Calu3 (cell line): ENCODE measurements at regions of chr3 and their contacts with region 1.

Region 1: GRCh38 chr3:184135149-184135910 is at the start of gene EIF2B5:
- DNase-seq: peak; percentile 95
- H3K4me3 Mint-ChIP-seq: peak within 1 kb of the TSS; percentile 99
- H3K27ac Mint-ChIP-seq: peak within 1 kb of the TSS; percentile 94
- H3K4me1 Mint-ChIP-seq: peaks cover 36% of the 10 kb centered on the region
- H3K27me3 Mint-ChIP-seq: no peaks in the 10 kb centered on the region
- CTCF ChIP-seq: peak; percentile 11
- total RNA-seq, gene EIF2B5: 79.6 and 87.9 TPM in 2 replicates

Region 2: DNA sequence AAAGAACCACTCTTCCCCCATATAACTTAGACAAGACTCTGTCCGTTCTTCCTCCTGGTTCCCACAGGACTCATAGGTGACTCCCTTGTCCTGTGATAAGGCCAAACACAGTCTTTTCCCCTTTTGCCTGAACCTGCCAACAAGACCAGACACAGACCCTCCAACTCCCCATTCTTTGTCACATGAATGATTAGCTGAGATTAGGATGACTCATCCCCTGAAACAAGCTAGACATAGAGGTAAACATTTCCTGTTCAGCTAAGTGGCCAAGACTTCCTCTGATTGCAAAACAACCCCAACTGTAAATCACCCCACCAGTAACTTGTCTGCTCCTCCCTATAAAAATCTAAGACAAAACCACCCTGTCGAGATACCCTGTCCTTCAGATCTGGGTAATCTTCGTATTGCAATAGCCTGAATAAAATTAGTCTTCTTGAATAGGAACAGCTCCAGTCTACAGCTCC is 49.9 kb before region 1 on chr3:
- CTCF ChIA-PET with region 1: no interaction called
- intact Hi-C with region 1: no loop called
- DNase-seq: no peak
- H3K4me3 Mint-ChIP-seq: no peak overlapping the region
- H3K27ac Mint-ChIP-seq: no peak overlapping the region
- H3K4me1 Mint-ChIP-seq: no peaks in the 10 kb centered on the region
- H3K27me3 Mint-ChIP-seq: no peaks in the 10 kb centered on the region
- CTCF ChIP-seq: no peak

Region 3: GRCh38 chr3:184168363-184169120 is 33.2 kb after region 1 on chr3:
- CTCF ChIA-PET with region 1: no interaction called
- intact Hi-C with region 1: no loop called
- DNase-seq: no peak
- H3K4me3 Mint-ChIP-seq: no peak overlapping the region
- H3K27ac Mint-ChIP-seq: no peak overlapping the region
- H3K4me1 Mint-ChIP-seq: no peaks in the 10 kb centered on the region
- H3K27me3 Mint-ChIP-seq: no peaks in the 10 kb centered on the region
- CTCF ChIP-seq: no peak

Region 4: GRCh38 chr3:184185461-184186308 is 50.4 kb after region 1 on chr3 and contains the start of gene ABCF3:
- CTCF ChIA-PET with region 1: interaction called, 5 read pairs
- intact Hi-C with region 1: loop called (anchors 2 kb)
- DNase-seq: peak; percentile 100
- H3K4me3 Mint-ChIP-seq: peak within 1 kb of the TSS; percentile 100
- H3K27ac Mint-ChIP-seq: peak within 1 kb of the TSS; percentile 96
- H3K4me1 Mint-ChIP-seq: peaks cover 27% of the 10 kb centered on the region
- H3K27me3 Mint-ChIP-seq: no peaks in the 10 kb centered on the region
- CTCF ChIP-seq: no peak
- total RNA-seq, gene ABCF3: 114 and 116 TPM in 2 replicates

Region 5: DNA sequence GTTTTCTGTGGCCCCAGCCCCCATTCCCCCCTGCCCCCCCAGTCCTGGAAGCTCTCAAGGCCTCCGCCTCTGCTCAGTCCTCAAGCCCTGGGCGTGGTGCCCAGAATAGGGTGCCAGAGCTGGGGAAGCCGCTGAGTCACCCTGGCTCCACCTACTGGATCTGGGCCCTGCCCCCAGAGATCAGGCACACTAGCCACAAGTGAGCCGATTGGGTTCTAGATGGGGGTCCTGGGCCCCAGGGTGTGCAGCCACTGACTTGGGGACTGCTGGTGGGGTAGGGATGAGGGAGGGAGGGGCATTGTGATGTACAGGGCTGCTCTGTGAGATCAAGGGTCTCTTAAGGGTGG is 184.7 kb after region 1 on chr3:
- CTCF ChIA-PET with region 1: no interaction called
- intact Hi-C with region 1: no loop called
- DNase-seq: peak; percentile 98
- H3K4me3 Mint-ChIP-seq: peak overlapping the region; percentile 60
- H3K27ac Mint-ChIP-seq: peak overlapping the region; percentile 30
- H3K4me1 Mint-ChIP-seq: peaks cover 48% of the 10 kb centered on the region
- H3K27me3 Mint-ChIP-seq: no peaks in the 10 kb centered on the region
- CTCF ChIP-seq: no peak

Region 6: DNA sequence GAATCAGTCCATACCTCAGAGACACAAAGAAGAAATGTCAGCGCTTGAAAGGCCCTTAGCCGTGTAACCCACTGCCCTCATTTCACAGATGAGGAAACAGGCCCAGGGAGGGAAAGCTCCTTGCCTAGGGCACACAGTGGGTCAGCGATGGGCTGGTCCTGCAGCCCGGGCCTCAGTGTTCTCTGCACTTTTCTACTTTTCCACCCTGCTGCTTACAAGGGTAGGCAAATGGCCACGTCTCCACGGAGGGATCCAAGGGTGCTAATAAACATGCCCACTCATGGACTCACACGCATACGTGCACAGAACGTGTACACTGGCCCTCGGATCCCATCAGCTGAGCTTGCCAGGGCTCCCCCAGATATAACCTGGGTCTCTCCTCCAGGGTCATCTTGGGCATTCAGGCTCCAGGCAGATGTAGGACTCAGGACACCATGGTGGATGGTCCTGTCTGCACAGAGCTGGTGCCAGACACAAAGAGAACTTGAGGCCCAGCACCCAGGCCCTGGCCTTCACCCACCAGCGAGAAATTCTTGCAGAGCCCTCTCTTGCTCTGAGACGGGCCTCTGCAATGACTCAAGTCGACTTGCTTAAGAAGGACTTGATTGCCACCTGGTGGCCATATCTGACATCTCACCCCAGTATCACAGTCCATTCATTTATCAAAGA is 642.1 kb after region 1 on chr3:
- CTCF ChIA-PET with region 1: no interaction called
- intact Hi-C with region 1: no loop called
- DNase-seq: peak; percentile 94
- H3K4me3 Mint-ChIP-seq: no peak overlapping the region
- H3K27ac Mint-ChIP-seq: no peak overlapping the region
- H3K4me1 Mint-ChIP-seq: peaks cover 21% of the 10 kb centered on the region
- H3K27me3 Mint-ChIP-seq: peaks cover 82% of the 10 kb centered on the region
- CTCF ChIP-seq: peak; percentile 96